G401 (cell line): ENCODE measurements at regions of chr10 and their contacts with region 1.

Region 1: GRCh38 chr10:12264204-12264940 is 68.4 kb downstream of the CDC123 start:
- DNase-seq: peak; percentile 72

Region 2: DNA sequence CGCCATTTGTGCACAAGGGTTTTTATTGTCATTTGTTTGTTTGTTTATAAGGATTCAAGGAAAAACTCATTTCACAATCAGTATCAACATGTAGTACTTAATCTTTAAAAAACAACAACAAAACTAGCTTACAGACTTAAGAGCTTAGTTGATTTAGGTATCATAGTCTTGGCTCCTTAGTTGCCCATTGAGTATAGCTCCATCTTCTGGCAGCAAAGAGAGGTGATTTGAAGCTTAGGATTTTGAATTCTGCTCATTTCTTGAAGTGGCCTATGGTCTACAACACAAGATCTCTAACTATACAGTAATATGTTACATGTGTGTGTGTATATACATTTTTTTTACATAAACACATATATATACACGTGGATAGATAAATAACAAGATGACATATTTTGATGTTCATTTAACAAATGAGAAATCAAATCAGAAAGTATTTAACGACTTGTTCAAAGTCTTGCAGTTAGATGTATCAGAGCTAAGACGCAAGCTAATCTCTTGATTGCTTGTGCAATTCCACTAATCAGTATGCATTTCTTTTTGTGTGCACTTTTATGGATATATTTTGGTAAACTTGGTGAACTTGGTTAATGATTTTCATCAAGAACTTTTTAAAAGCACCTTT is 392.3 kb after region 1 on chr10:
- in situ Hi-C with region 1: loop called (anchors 25 kb)
- DNase-seq: peak; percentile 53